GM10248 (cell line): ENCODE measurements at regions of chr19 and their contacts with region 1.

Region 1: GRCh38 chr19:28466107-28467045 is 746.6 kb downstream of the UQCRFS1 start:
- DNase-seq: peak; percentile 58
- CTCF ChIP-seq: peak; percentile 69

Region 2: DNA sequence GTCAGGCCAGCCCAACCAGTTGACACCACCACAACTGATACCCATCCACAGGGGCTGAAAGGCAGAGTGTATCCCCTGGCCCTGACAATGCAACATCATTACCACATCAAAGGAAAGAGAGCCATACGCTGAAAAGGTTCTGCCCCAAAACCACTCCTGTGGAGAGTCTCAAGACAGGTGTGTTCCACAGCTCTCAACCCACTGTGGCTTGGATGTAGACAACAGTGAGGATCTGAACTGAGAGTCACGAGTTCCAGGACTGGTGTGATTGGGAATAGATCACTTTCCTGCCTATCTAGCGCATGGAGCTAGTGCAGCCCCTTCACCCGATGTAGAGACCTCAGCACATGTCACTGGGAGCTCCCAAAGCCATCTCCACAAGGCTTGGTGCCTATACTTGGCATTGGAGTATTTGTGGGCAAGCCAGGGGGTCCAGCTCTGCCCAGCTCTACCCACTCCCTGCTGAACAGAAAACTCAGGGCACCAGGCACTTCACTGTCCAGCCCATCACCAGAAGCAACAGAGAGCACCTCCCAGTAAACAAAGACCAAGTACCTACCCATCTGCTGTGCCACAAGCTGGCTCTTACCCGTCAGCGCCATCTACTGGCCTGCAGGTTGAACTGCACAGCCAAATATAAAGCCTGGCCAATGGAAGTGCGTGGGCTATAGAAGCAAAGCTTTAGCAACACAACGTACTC is 167.1 kb after region 1 on chr19:
- CTCF ChIA-PET with region 1: interaction called, 11 read pairs
- POLR2A ChIA-PET with region 1: no interaction called
- DNase-seq: peak; percentile 40
- CTCF ChIP-seq: peak; percentile 69